ENCODE measurements at regions of chr2 and their contacts with region 1.

Region 1: GRCh38 chr2:43169987-43170386 is 56.4 kb downstream of the ZFP36L2 start:
- DNase-seq: peak; percentile 83
- H3K4me3 Mint-ChIP-seq: peak overlapping the region; percentile 76
- H3K27ac Mint-ChIP-seq: peak overlapping the region; percentile 95
- H3K4me1 Mint-ChIP-seq: peaks cover 86% of the 10 kb centered on the region
- H3K27me3 Mint-ChIP-seq: peaks cover 4% of the 10 kb centered on the region

Region 2: GRCh38 chr2:43051316-43051715 is 118.7 kb before region 1 on chr2:
- CTCF ChIA-PET with region 1: no interaction called
- DNase-seq: peak; percentile 47
- H3K4me3 Mint-ChIP-seq: no peak overlapping the region
- H3K27ac Mint-ChIP-seq: no peak overlapping the region
- H3K4me1 Mint-ChIP-seq: peaks cover 28% of the 10 kb centered on the region
- H3K27me3 Mint-ChIP-seq: peaks cover 62% of the 10 kb centered on the region

Region 3: DNA sequence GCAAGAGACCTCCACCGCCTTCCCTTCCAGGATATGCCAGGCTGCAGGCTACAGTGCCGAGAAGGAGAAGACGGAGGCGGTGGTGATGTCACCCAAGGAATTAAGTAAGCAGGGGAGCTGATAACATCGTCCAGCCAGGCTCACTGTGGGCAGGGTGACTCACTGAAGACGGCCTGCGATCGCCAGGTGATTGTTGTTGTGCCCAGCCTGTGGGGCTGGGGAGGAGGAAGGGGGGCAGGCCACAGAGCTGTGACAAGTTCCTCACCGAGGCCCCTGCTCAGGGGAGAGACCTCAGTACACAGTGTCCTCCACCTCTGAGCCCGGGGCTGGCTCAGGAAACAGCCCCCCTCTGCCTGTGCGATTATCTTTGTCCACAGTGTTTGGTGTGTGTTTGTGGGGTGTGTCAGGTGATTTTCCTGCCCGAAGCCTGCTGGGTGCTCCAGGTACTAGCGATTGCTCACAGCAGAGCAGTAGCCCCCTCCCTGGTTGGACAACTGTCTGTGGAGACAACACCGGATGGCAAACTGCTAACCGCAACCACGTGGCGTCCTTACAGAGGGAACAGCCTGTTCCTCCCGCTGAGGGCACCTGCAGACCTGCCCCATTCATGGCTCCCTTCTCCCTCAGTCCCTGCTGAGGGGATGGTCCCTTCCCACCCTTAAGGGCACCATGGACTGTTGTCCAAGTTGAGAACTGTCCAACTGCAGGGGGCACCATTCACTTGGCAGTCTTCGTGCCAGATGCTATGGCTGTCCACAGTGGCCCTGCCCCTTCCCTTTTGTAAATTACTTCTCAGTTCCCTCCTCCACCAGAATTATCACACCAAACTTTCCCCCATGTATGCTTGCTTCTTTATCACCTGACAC is 38.7 kb before region 1 on chr2:
- CTCF ChIA-PET with region 1: interaction called, 27 read pairs
- DNase-seq: peak; percentile 94
- H3K4me3 Mint-ChIP-seq: peak overlapping the region; percentile 56
- H3K27ac Mint-ChIP-seq: peak overlapping the region; percentile 99
- H3K4me1 Mint-ChIP-seq: peaks cover 91% of the 10 kb centered on the region
- H3K27me3 Mint-ChIP-seq: no peaks in the 10 kb centered on the region

Region 4: DNA sequence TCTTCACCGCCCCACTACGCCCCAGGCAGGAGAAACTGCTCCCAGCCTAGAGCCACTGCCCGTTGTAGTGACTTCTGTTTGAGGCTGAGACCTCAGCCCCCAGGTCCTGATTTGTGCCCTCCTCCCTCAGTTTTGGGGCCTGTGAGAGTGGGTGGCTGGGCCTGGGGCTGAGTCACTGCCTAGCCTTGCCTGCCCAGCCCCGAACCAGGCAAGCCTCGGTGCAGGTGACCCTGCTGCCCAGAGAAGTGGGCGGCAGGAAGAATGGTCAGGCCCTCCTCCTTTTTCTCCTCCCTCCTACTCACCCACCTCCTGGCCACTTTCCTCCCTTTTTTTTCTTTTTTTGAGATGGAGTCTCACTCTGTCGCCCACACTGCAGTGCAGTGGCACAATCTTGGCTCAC is 10.2 kb before region 1 on chr2:
- CTCF ChIA-PET with region 1: interaction called, 26 read pairs
- DNase-seq: peak; percentile 39
- H3K4me3 Mint-ChIP-seq: peak overlapping the region; percentile 53
- H3K27ac Mint-ChIP-seq: peak overlapping the region; percentile 98
- H3K4me1 Mint-ChIP-seq: peaks cover 78% of the 10 kb centered on the region
- H3K27me3 Mint-ChIP-seq: no peaks in the 10 kb centered on the region

Region 5: GRCh38 chr2:43194121-43194869 is 24.3 kb after region 1 on chr2:
- CTCF ChIA-PET with region 1: interaction called, 32 read pairs
- DNase-seq: peak; percentile 37
- H3K4me3 Mint-ChIP-seq: peak overlapping the region; percentile 87
- H3K27ac Mint-ChIP-seq: peak overlapping the region; percentile 98
- H3K4me1 Mint-ChIP-seq: peaks cover 64% of the 10 kb centered on the region
- H3K27me3 Mint-ChIP-seq: peaks cover 3% of the 10 kb centered on the region

Region 6: DNA sequence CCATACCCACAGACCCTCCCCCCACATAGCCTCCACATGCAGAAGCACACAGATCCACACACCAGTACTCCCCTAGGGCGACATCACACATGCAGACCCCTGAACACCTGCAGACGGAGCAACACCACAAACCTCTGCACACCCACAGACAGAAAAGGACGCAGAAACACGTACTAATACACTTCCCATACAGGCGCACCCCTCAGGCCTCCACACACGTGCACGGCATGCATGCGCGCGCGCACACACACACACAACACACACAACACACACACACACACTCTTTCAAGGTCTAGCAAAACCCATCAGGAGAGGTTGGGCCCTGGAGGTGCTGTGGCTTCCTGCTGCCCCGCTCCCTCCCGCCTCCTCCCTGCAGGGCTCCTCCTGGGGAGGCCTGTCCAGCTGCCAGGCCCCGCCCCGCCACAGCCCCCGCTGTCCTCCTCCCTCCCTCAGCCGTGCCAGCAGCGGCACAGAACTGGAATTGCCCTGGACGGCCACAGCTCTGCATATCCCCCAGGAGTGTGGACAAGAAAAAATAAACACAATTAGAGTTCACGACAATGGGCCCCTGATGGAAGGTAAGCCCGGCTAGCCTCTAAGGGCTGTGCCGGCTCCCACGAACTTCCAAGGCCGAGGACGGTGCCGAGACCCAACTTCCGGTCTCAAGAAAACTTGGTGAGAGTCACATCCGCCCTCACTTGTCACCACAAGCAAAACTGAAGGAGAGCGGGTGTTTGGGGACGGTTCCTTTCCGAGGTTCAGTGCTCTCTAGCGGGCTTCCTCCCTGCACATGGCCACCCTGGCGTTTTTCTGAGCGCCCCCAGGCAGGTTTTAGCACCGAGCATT is 49.6 kb after region 1 on chr2:
- CTCF ChIA-PET with region 1: interaction called, 88 read pairs
- DNase-seq: peak; percentile 92
- H3K4me3 Mint-ChIP-seq: peak overlapping the region; percentile 79
- H3K27ac Mint-ChIP-seq: peak overlapping the region; percentile 97
- H3K4me1 Mint-ChIP-seq: peaks cover 36% of the 10 kb centered on the region
- H3K27me3 Mint-ChIP-seq: peaks cover 8% of the 10 kb centered on the region

Measured in activated naive CD4-positive, alpha-beta T cell treated with anti-CD3 and anti-CD28 coated beads, Interleukin-2, amount 10 ng/mL, durations not matched to agents 7 days and 5 days (primary cell).